ENCODE measurements at regions of chr4 and their contacts with region 1.

Region 1: DNA sequence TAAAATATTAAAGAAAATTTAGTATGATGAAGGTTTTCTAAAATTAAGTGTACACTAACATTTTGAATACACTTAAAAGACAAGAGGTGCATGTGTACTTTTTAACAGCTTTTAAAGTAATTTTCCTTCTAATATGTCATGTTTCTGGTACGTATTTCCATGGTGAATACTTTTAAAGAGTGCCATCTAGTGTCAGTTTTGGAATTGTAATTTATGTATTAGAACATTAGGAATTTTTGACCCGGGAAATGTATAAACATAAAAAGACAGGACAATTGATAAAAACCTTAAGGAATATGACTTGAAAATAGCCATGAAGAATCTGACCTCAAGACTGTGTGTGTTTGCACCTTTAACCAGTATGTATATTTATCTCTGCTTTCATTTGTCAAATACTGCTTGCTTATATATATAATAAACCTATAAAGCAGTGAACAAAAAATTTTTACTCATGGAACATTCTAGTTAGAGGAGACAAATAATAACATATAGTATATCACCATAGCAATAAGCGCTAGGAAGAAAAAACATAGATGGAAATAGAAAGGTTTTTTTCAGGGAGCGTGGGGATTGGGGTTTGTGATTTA is 7.2 kb downstream of the GSTCD start:
- DNase-seq: peak; percentile 28
- ATAC-seq: no peak
- H3K4me3 ChIP-seq: no peak overlapping the region
- H3K27ac ChIP-seq: no peak overlapping the region
- H3K4me1 ChIP-seq: peaks cover 25% of the 10 kb centered on the region
- H3K27me3 ChIP-seq: no peaks in the 10 kb centered on the region
- CTCF ChIP-seq: peak; percentile 38; the same call in 1 of the 2 replicates
- EP300 ChIP-seq: no peak
- POLR2A ChIP-seq: no peak
- RAD21 ChIP-seq: no peak

Region 2: GRCh38 chr4:104382961-104383360 is 1332.8 kb before region 1 on chr4:
- CTCF ChIA-PET with region 1: no interaction called
- POLR2A ChIA-PET with region 1: no interaction called
- in situ Hi-C with region 1: no loop called
- intact Hi-C with region 1: no loop called
- DNase-seq: peak; percentile 1
- ATAC-seq: no peak
- H3K4me3 ChIP-seq: no peak overlapping the region
- H3K27ac ChIP-seq: no peak overlapping the region
- H3K4me1 ChIP-seq: no peaks in the 10 kb centered on the region
- H3K27me3 ChIP-seq: no peaks in the 10 kb centered on the region
- CTCF ChIP-seq: no peak
- EP300 ChIP-seq: no peak
- POLR2A ChIP-seq: no peak
- RAD21 ChIP-seq: no peak

Region 3: DNA sequence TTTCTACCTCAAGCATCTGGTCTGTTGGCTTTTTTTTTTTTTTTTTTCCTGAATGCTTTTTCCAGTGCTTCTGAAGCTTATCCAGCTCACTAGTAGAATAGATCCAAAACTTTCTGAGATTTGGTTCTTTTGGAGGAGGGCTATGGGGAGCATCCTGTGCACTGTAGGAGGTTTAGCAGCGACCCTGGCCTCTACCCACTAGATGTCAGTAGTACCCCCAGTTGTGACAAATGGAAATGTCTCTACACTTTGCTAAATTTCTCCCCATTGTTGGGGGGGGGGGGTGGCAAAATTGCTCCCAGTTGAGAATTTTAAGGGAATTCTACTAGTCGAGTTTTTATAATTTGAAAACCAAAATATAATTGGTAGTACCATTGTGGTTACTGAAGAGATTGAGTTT is 218.9 kb before region 1 on chr4:
- CTCF ChIA-PET with region 1: interaction called, 4 read pairs
- POLR2A ChIA-PET with region 1: no interaction called
- in situ Hi-C with region 1: no loop called
- intact Hi-C with region 1: loop called (anchors 1 kb)
- DNase-seq: no peak
- ATAC-seq: peak; percentile 38; the same call in 1 of the 3 replicates
- H3K4me3 ChIP-seq: no peak overlapping the region
- H3K27ac ChIP-seq: no peak overlapping the region
- H3K4me1 ChIP-seq: no peaks in the 10 kb centered on the region
- H3K27me3 ChIP-seq: no peaks in the 10 kb centered on the region
- CTCF ChIP-seq: no peak
- EP300 ChIP-seq: no peak
- POLR2A ChIP-seq: no peak
- RAD21 ChIP-seq: no peak

Region 4: GRCh38 chr4:105520817-105521790 is 194.7 kb before region 1 on chr4:
- CTCF ChIA-PET with region 1: no interaction called
- POLR2A ChIA-PET with region 1: no interaction called
- in situ Hi-C with region 1: no loop called
- intact Hi-C with region 1: loop called (anchors 1 kb)
- DNase-seq: peak; percentile 35
- ATAC-seq: peak; percentile 85
- H3K4me3 ChIP-seq: no peak overlapping the region
- H3K27ac ChIP-seq: no peak overlapping the region
- H3K4me1 ChIP-seq: no peaks in the 10 kb centered on the region
- H3K27me3 ChIP-seq: no peaks in the 10 kb centered on the region; a peak in 1 of 5 replicates
- CTCF ChIP-seq: peak; percentile 73
- EP300 ChIP-seq: no peak
- POLR2A ChIP-seq: no peak
- RAD21 ChIP-seq: no peak

Region 5: GRCh38 chr4:106201373-106201772 is 485.6 kb after region 1 on chr4:
- CTCF ChIA-PET with region 1: no interaction called
- POLR2A ChIA-PET with region 1: no interaction called
- in situ Hi-C with region 1: no loop called
- intact Hi-C with region 1: loop called (anchors 2 kb)
- DNase-seq: peak; percentile 7
- ATAC-seq: peak; percentile 66; the same call in 2 of the 3 replicates
- H3K4me3 ChIP-seq: no peak overlapping the region
- H3K27ac ChIP-seq: no peak overlapping the region
- H3K4me1 ChIP-seq: no peaks in the 10 kb centered on the region
- H3K27me3 ChIP-seq: no peaks in the 10 kb centered on the region
- CTCF ChIP-seq: peak; percentile 56
- EP300 ChIP-seq: no peak
- POLR2A ChIP-seq: no peak
- RAD21 ChIP-seq: no peak